BJ (cell line): ENCODE measurements at regions of chr12 and their contacts with region 1.

Region 1: GRCh38 chr12:54251667-54252284 is 28.1 kb downstream of the CBX5 start:
- DNase-seq: no peak
- H3K4me3 ChIP-seq: no peak overlapping the region
- H3K27me3 ChIP-seq: no peaks in the 10 kb centered on the region
- CTCF ChIP-seq: peak; percentile 66

Region 2: GRCh38 chr12:54220092-54220557 is 31.7 kb before region 1 on chr12:
- CTCF ChIA-PET with region 1: interaction called, 11 read pairs
- POLR2A ChIA-PET with region 1: no interaction called
- DNase-seq: peak; percentile 32
- H3K4me3 ChIP-seq: no peak overlapping the region
- H3K27me3 ChIP-seq: no peaks in the 10 kb centered on the region; the same call in 1 of the 2 replicates
- CTCF ChIP-seq: peak; percentile 88

Region 3: GRCh38 chr12:54240971-54241588 is 10.7 kb before region 1 on chr12:
- CTCF ChIA-PET with region 1: interaction called, 20 read pairs
- POLR2A ChIA-PET with region 1: no interaction called
- DNase-seq: no peak
- H3K4me3 ChIP-seq: no peak overlapping the region
- H3K27me3 ChIP-seq: no peaks in the 10 kb centered on the region
- CTCF ChIP-seq: no peak

Region 4: GRCh38 chr12:54279866-54280467 is 28.2 kb after region 1 on chr12 and contains the start of gene CBX5:
- CTCF ChIA-PET with region 1: interaction called, 12 read pairs
- POLR2A ChIA-PET with region 1: interaction called, 10 read pairs
- DNase-seq: peak; percentile 93
- H3K4me3 ChIP-seq: peak within 1 kb of the TSS; percentile 94
- H3K27me3 ChIP-seq: no peaks in the 10 kb centered on the region
- CTCF ChIP-seq: no peak
- polyA plus RNA-seq, gene CBX5: 14.3 and 33.2 TPM in 2 replicates

Region 5: DNA sequence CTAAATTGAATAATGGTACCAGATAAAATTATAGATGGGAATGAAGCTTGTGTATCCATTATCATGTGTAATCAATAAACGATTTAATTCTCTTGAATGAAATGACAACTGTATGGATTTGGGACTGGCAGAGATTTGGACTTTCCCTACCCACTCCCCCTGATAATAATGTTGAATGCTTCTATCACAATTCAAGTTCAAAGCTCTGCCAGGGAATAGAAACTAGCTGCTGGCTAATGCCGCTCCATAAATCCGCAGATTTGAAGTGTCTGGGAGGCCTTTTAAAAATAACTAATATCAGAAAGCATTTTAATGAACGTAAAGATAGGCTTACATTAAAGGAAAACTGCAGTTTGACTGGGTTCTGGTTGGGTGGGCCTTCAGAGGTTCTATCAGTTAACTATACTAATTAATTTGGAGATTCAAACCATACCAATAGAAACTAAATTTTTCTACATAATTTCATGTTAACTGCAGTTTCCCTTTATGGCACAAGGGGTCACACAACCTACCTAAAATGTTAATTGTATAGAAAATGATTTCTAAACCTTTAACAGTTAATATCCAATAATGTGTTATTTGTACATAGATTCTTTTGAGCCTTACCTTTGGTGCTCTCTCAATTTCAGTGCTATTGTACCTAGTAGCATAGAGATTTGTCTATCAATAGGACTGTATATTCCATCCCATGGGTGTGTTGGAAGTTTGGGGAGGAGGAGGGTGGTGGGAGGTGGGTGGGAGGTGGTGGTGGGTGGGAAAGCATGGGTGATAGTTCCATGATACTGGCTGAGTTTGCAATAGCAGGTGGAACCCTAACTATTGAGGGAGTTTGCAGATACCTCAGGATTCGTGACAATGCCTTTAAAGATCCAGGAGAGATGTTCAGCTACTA is 33.6 kb after region 1 on chr12:
- CTCF ChIA-PET with region 1: interaction called, 12 read pairs
- POLR2A ChIA-PET with region 1: interaction called, 10 read pairs
- DNase-seq: no peak
- H3K4me3 ChIP-seq: no peak overlapping the region
- H3K27me3 ChIP-seq: no peaks in the 10 kb centered on the region
- CTCF ChIP-seq: peak; percentile 41; the same call in 1 of the 2 replicates

Region 6: GRCh38 chr12:54479421-54479820 is 227.6 kb after region 1 on chr12:
- CTCF ChIA-PET with region 1: no interaction called
- POLR2A ChIA-PET with region 1: no interaction called
- DNase-seq: peak; percentile 72
- H3K4me3 ChIP-seq: no peak overlapping the region
- H3K27me3 ChIP-seq: no peaks in the 10 kb centered on the region
- CTCF ChIP-seq: no peak

Region 7: DNA sequence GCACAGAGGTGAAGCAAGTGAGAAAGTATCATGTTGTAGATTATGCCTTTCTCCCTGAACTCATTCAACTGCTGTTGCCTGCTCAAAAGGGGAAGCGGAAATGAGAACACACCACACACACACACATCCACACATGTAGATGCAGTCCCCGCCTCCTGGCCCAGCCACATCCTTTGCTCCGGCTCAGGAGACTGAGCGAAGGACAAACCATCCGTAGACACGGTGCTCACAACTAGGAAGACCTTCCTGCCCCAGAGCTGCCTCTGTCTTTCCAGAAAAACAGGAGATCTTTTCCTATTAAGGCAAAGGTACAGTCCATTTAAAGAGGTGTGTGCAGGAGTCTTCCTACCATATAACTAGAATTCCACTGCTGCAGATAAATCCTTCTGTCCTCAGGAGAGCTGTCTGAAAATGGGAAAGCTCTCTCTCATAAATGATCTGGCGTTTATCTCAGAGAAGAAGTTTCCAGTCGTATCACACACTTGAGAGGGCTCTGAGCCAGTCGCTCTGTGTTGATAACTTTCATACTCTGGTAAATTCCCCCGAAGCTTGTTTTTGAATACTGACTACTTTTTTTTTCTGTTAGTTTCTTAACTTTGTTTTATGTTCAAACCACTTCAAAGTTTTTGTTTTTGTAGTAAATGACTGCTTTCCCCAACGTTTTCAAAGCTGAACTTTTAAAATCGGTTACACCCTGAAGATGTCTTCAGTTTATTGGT is 733.0 kb after region 1 on chr12 and contains the start of gene TESPA1:
- CTCF ChIA-PET with region 1: no interaction called
- POLR2A ChIA-PET with region 1: no interaction called
- DNase-seq: no peak
- H3K4me3 ChIP-seq: no peak within 1 kb of the TSS
- H3K27me3 ChIP-seq: no peaks in the 10 kb centered on the region; the same call in 1 of the 2 replicates
- CTCF ChIP-seq: no peak
- polyA plus RNA-seq, gene TESPA1: not detected in 2 replicates